Dorsolateral prefrontal cortex (tissue), 120 donors: ENCODE measurements at regions of chr13 and their contacts with region 1.

Region 1: DNA sequence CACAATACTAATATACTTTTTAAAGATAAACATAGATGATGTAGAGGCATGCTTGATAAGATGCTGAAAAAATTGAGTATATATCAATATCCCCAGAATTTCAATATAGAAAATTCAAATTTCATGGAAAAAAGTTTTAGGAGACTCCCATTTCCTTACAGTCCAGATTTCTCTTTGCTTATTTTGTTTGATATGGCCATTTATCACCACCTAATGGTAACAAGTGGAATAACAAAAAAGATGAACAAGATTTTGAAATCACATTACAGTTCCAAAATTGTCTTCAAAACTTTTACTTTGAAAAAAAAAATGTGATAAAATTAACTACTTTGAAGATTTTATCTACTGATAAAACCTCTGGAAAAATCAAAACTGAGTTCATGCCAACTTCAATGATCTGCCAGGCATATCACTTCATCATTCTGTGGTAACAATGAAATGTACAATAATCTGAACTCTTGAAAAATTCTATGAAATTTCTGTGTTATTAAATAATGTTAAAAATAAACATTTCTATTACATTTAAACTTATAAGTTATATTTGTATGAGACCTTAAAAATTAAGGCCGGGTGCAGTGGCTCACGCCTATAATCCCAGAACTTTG is 17.5 kb downstream of the MIPEP start:
- DNase-seq: no peak
- H3K4me3 ChIP-seq: no peak overlapping the region
- H3K27ac ChIP-seq: no peak overlapping the region
- H3K27me3 ChIP-seq: no peaks in the 10 kb centered on the region
- CTCF ChIP-seq: peak; percentile 44 to 92 (median 75)

Region 2: GRCh38 chr13:23375001-23375971 is 496.4 kb before region 1 on chr13:
- intact Hi-C with region 1: loop called in 1 of 2 experiments (anchors 10 kb)
- DNase-seq: peak; percentile 95 to 99 (median 96)
- H3K4me3 ChIP-seq: peak overlapping the region; percentile 59 to 98 (median 84)
- H3K27ac ChIP-seq: peak overlapping the region; percentile 0 to 94 (median 83)
- H3K27me3 ChIP-seq: no peaks in the 10 kb centered on the region
- CTCF ChIP-seq: peak in 39 of 56 donors; percentile 6 to 67 (median 35)

Region 3: DNA sequence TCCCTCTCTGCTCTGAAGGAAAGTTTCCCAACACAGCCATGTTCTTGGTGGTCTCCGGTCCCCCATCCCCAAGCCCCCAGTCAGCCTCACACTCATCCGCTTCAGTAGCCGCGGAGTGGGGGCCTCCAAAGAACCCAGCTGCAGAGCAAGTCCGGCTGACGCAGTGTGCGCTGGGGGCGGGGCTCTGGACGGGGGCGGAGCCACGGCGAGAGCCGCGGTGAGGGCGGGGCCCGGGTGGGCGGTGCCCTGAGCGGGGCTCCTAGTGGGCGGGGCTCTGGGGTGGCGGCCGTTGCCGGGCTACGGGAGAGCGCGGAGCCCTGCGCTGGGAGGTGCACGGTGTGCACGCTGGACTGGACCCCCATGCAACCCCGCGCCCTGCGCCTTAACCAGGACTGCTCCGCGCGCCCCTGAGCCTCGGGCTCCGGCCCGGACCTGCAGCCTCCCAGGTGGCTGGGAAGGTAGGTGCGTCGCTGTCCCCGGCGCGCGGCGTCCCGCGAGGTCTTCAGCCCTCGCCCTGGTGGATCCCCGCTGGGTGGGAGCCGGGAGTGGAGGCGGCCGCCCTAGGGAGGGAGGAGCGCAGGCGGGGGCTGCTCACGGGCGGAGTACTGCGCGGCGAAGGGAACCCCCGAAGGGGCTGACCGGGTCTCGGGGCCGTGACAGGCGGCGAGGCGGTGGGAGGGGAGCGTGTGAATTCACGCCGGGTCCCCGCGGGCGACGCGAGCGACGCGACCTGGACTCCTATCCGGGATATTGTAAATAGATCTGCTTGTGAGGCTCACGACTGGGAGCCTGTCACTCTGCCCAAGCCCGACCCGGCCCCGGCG is 292.4 kb before region 1 on chr13:
- intact Hi-C with region 1: loop called in 1 of 2 experiments (anchors 10 kb)
- DNase-seq: peak; percentile 55 to 92 (median 83)
- H3K4me3 ChIP-seq: peak overlapping the region; percentile 59 to 96 (median 84)
- H3K27ac ChIP-seq: peak overlapping the region in 45 of 59 donors; percentile 16 to 88 (median 66)
- H3K27me3 ChIP-seq: peaks cover 0 to 24% (median 3%) of the 10 kb centered on the region in 45 donors
- CTCF ChIP-seq: no peak

Region 4: GRCh38 chr13:23637829-23638228 is 233.9 kb before region 1 on chr13:
- intact Hi-C with region 1: no loop called
- DNase-seq: no peak
- H3K4me3 ChIP-seq: peak overlapping the region in 6 of 59 donors; percentile 0 to 16 (median 11)
- H3K27ac ChIP-seq: peak overlapping the region in 42 of 59 donors; percentile 5 to 92 (median 60)
- H3K27me3 ChIP-seq: no peaks in the 10 kb centered on the region
- CTCF ChIP-seq: no peak

Region 5: GRCh38 chr13:23715762-23716235 is 155.9 kb before region 1 on chr13:
- intact Hi-C with region 1: loop called in 1 of 2 experiments (anchors 5 kb)
- DNase-seq: no peak
- H3K4me3 ChIP-seq: no peak overlapping the region
- H3K27ac ChIP-seq: no peak overlapping the region
- H3K27me3 ChIP-seq: no peaks in the 10 kb centered on the region
- CTCF ChIP-seq: peak in 10 of 56 donors; percentile 15 to 52 (median 27)